Endothelial cell of umbilical vein (primary cell): ENCODE measurements at regions of chr6 and their contacts with region 1.

Region 1: GRCh38 chr6:35213824-35214756 is at the start of gene SCUBE3:
- DNase-seq: peak; percentile 31
- H3K4me3 ChIP-seq: peak within 1 kb of the TSS; percentile 14 to 40 (median 36)
- H3K27ac ChIP-seq: no peak within 1 kb of the TSS
- H3K4me1 ChIP-seq: peaks cover 5% of the 10 kb centered on the region
- H3K27me3 ChIP-seq: peaks cover 34 to 44% of the 10 kb centered on the region in 2 experiments
- CTCF ChIP-seq: no peak
- POLR2A ChIP-seq: no peak
- total RNA-seq, gene SCUBE3: 0.62 and 1.5 TPM in 2 replicates

Region 2: GRCh38 chr6:35230950-35231349 is 16.9 kb after region 1 on chr6:
- CTCF ChIA-PET with region 1: interaction called, 113 read pairs
- POLR2A ChIA-PET with region 1: interaction called, 3 read pairs
- dilution Hi-C with region 1: no loop called
- intact Hi-C with region 1: no loop called
- DNase-seq: no peak
- H3K4me3 ChIP-seq: no peak overlapping the region
- H3K27ac ChIP-seq: no peak overlapping the region
- H3K4me1 ChIP-seq: no peaks in the 10 kb centered on the region
- H3K27me3 ChIP-seq: no peaks in the 10 kb centered on the region
- CTCF ChIP-seq: no peak
- POLR2A ChIP-seq: no peak

Region 3: DNA sequence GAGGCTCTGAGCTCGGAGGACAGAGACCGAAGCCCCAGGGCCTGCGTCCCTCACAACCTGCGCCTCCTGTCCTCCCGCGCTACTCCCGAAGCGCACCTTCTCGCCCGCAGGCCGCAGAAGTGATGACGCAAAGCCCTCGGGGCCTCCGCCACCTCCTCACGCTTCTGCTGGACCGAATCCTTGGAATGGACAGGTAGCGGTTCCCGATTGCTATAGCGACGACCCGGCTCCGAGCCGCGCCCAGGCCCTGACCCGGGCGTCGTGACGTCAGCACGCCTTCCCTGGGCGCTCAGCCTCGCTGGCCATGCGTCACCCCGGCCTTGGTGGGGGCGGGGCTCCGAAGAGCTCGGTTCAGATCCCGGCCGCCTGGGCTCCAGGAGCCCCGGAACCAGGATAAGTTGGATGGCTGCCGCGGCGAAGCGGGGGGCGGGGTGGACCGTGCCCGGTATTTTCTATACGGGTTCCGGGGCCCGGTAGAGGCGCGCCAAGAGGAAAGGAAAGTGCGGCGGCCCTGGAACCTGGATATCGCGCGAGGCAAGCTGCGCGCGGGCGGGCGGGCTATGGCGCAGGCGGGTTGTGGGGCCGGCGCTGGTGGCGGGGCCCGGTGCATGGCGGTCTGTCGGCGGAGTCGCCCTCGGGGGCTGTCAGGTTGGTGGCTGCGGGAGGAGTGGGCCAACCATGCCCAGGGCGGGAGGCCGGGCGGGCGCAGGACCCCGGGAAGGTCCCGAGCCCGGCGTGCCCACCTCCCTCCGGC is 45.3 kb after region 1 on chr6 and contains the start of gene ZNF76:
- CTCF ChIA-PET with region 1: no interaction called
- POLR2A ChIA-PET with region 1: no interaction called
- dilution Hi-C with region 1: no loop called
- intact Hi-C with region 1: loop called (anchors 5 kb)
- DNase-seq: peak; percentile 93
- H3K4me3 ChIP-seq: peak within 1 kb of the TSS; percentile 55 to 63 (median 62)
- H3K27ac ChIP-seq: peak within 1 kb of the TSS; percentile 25
- H3K4me1 ChIP-seq: peaks cover 14% of the 10 kb centered on the region
- H3K27me3 ChIP-seq: no peaks in the 10 kb centered on the region
- CTCF ChIP-seq: no peak
- POLR2A ChIP-seq: peak; percentile 71
- total RNA-seq, gene ZNF76: 26.7 and 34.6 TPM in 2 replicates